ENCODE measurements at regions of chr11 and their contacts with region 1.

Region 1: GRCh38 chr11:17063171-17064002 is 14.1 kb downstream of the RPS13 start:
- DNase-seq: peak; percentile 85
- H3K4me3 Mint-ChIP-seq: no peak overlapping the region
- H3K27ac Mint-ChIP-seq: no peak overlapping the region
- H3K4me1 Mint-ChIP-seq: no peaks in the 10 kb centered on the region
- H3K27me3 Mint-ChIP-seq: peaks cover 5% of the 10 kb centered on the region

Region 2: DNA sequence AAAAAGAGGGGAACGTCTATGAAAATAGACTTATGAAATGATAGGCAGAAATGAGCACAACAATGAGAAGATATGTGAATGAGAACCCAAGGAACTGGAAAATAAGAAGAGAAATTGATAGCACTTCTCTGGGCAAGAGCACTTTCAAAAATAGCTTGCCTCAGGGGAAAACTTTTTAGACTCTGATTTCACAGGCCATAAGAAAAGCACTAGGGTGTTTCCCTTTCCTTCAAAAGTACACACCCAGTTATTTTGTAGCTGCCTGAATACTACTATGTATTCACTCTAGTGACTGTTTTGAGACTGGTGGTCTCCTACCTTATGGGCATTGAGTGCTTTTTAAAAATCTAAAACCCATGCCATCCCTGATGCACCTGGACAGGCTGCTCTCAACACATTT is 534.7 kb before region 1 on chr11:
- intact Hi-C with region 1: no loop called
- DNase-seq: no peak
- H3K4me3 Mint-ChIP-seq: no peak overlapping the region
- H3K27ac Mint-ChIP-seq: no peak overlapping the region
- H3K4me1 Mint-ChIP-seq: no peaks in the 10 kb centered on the region
- H3K27me3 Mint-ChIP-seq: no peaks in the 10 kb centered on the region

Region 3: DNA sequence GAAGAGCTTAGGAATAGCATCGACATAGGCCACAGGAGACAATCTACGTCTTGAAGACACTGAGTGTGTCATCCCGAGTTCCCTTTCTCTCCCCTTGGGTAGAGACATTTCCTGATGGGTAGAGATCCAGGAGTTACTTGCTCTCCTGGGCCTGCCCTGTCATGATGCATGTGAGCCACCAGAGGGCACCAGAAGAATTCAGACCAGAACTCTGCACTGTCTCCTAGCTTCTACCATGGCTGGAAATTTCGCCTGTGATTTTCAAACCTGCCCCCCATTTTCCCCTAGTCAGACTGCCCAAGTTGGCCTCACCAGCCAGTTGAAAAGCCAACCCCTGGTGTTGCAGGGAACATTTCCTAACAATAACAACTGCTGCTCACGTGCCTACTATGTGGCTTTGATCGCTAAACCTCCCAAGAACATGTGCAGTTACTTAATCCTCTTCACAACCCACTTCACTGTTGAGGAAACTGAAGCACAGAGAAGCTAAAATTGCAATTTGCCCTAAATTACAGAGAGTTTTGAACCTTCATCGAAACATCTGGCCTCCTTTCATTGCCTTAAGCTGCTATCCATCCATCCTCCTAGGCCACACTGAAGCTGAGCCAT is 277.8 kb before region 1 on chr11:
- intact Hi-C with region 1: loop called (anchors 1 kb)
- DNase-seq: peak; percentile 86
- H3K4me3 Mint-ChIP-seq: no peak overlapping the region
- H3K27ac Mint-ChIP-seq: no peak overlapping the region
- H3K4me1 Mint-ChIP-seq: no peaks in the 10 kb centered on the region
- H3K27me3 Mint-ChIP-seq: no peaks in the 10 kb centered on the region

Region 4: DNA sequence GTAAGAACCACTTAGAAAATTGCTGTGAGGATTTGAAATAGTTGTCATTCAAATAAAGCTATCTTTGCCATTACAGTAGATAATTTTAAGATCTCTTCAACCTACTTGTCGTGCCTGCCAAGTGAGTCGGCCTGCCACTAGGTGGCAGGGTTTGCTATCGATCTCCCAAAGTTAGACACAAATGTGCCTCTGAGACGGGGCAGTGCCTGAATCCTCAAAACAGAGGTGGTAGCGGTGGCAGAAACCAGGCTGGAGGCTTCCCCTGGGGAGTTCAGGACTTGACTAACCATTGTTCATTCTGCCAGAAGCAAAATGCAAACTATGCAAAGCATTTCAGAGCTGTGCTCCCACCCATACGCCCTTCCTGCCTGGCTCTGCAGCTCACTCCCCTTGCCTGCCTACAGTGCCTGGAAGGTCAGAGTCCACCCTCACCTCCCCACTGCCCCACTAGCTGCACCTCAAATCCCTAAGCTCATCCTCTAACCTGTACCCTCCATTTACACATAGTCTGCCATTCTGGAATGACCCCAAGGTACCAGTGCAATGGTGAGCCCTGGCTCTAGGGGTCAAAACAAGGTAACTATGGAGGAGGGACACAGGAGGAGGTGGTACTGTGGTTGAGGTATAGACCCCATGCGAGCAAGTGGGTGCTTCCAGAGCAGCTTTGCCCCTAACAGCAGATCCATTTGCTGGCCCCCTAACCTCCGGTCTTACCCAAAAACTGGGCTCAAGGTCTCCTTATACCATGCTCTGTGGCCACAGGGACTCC is 242.9 kb before region 1 on chr11:
- intact Hi-C with region 1: loop called (anchors 1 kb)
- DNase-seq: peak; percentile 77
- H3K4me3 Mint-ChIP-seq: no peak overlapping the region
- H3K27ac Mint-ChIP-seq: no peak overlapping the region
- H3K4me1 Mint-ChIP-seq: peaks cover 10% of the 10 kb centered on the region
- H3K27me3 Mint-ChIP-seq: no peaks in the 10 kb centered on the region

Region 5: DNA sequence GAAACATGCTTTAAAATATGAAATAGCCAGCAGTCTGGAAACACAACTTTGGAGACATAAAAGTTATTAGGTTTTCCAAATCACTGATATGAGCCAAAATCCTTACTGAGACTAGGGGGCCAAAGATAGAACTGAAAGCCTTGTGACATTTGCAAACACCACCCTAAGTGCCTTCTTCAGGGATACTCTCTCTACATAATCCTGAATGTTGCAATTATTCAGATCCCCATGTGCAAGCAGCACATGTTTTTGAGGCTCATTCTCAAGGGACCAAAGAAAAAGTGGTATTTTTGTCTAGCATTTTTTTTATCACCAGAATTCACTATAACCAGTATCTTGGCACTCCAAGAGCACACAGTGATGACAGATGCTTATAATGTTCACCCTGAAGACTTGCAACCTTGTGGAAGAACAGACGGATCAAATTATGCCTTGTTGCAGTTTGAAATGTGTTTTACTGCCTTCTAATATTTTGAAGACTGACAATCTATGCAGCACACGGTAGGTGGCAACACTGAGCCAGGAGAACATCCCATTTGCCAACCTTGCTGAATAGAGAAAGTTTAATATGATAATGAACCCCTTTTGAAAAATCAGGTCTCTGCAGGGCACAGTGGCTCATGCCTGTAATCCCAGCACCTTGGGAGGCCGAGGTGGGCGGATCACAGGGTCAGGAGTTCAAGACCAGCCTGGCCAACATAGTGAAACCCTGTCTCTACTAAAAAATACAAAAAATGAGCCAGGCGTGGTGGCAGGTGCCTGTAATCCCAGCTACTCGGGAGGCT is 127.7 kb before region 1 on chr11:
- intact Hi-C with region 1: loop called (anchors 1 kb)
- DNase-seq: peak; percentile 74
- H3K4me3 Mint-ChIP-seq: no peak overlapping the region
- H3K27ac Mint-ChIP-seq: no peak overlapping the region
- H3K4me1 Mint-ChIP-seq: no peaks in the 10 kb centered on the region
- H3K27me3 Mint-ChIP-seq: peaks cover 6% of the 10 kb centered on the region

Region 6: GRCh38 chr11:16945671-16946469 is 117.5 kb before region 1 on chr11:
- intact Hi-C with region 1: loop called (anchors 1 kb)
- DNase-seq: peak; percentile 77
- H3K4me3 Mint-ChIP-seq: no peak overlapping the region
- H3K27ac Mint-ChIP-seq: peak overlapping the region; percentile 21
- H3K4me1 Mint-ChIP-seq: peaks cover 5% of the 10 kb centered on the region
- H3K27me3 Mint-ChIP-seq: peaks cover 1% of the 10 kb centered on the region

Region 7: DNA sequence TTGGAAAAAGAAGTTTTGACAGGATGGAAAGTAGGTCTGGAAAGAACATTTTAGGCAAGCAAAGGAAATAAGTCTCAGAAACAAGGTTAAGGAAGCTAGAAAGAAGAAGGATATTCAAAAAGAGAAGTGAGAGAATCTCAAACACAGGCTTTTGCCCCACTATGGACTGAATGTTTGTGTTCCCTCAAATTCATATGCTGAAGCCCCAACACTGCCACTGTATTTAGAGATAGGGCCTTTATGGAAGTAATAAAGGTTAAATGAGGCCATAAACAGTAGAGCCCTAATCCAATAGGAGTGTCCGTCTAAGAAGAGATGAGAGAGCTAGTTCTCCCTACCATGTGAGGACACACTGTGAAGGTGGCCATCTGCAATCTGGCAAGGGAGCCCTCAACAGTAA is 34.7 kb after region 1 on chr11:
- intact Hi-C with region 1: no loop called
- DNase-seq: no peak
- H3K4me3 Mint-ChIP-seq: no peak overlapping the region
- H3K27ac Mint-ChIP-seq: no peak overlapping the region
- H3K4me1 Mint-ChIP-seq: peaks cover 2% of the 10 kb centered on the region
- H3K27me3 Mint-ChIP-seq: no peaks in the 10 kb centered on the region

Region 8: DNA sequence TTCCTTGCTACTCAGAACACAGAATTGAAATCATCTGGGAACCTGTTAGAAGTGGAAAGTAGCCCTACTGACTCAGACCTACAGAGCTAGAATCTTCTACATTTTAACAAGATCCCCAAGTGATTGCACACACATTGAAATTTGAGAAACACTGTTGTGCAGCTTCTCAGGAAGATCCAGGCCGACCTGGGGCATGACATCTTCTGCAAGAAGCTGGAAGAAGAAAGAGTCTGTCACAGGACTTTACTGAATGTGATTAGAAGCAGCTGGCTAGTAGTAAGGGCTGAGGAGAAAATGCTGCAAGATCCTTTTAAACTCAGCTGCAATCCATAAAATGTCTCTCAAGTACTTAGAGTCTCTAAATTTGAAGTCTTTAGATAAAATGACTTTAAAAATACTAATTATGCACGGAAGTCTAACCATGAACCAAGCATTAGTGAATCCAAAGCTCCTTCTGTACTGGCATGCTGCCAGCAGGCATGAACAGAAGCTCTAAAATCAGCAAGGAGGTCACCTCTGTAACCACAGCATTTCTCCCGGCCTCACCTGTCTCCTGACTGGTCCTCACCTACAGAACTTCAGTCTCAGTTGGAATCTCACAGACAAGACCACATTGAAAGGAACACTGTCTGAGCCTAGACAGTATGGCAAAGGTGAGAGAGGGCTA is 864.4 kb after region 1 on chr11:
- intact Hi-C with region 1: no loop called
- DNase-seq: no peak
- H3K4me3 Mint-ChIP-seq: no peak overlapping the region
- H3K27ac Mint-ChIP-seq: no peak overlapping the region
- H3K4me1 Mint-ChIP-seq: no peaks in the 10 kb centered on the region
- H3K27me3 Mint-ChIP-seq: no peaks in the 10 kb centered on the region